ENCODE measurements at regions of chr6 and their contacts with region 1.

Region 1: GRCh38 chr6:53956068-53956711 is 155.1 kb upstream of the MLIP start:
- DNase-seq: peak; percentile 77
- H3K4me3 ChIP-seq: no peak overlapping the region
- H3K27ac ChIP-seq: no peak overlapping the region
- H3K4me1 ChIP-seq: no peaks in the 10 kb centered on the region
- H3K27me3 ChIP-seq: no peaks in the 10 kb centered on the region
- CTCF ChIP-seq: peak; percentile 68

Region 2: GRCh38 chr6:53734473-53735299 is 221.5 kb before region 1 on chr6:
- intact Hi-C with region 1: loop called (anchors 5 kb)
- DNase-seq: peak; percentile 68
- H3K4me3 ChIP-seq: no peak overlapping the region
- H3K27ac ChIP-seq: peak overlapping the region; percentile 67
- H3K4me1 ChIP-seq: no peaks in the 10 kb centered on the region
- H3K27me3 ChIP-seq: no peaks in the 10 kb centered on the region
- CTCF ChIP-seq: peak; percentile 36